Mammary epithelial cell (primary cell): ENCODE measurements at regions of chr11 and their contacts with region 1.

Region 1: GRCh38 chr11:13210424-13210823 is 67.2 kb upstream of the BMAL1 start:
- DNase-seq: peak; percentile 63
- H3K4me3 ChIP-seq: no peak overlapping the region
- H3K27ac ChIP-seq: no peak overlapping the region
- H3K4me1 ChIP-seq: peaks cover 33% of the 10 kb centered on the region
- H3K27me3 ChIP-seq: no peaks in the 10 kb centered on the region
- CTCF ChIP-seq: peak; percentile 77 to 79

Region 2: DNA sequence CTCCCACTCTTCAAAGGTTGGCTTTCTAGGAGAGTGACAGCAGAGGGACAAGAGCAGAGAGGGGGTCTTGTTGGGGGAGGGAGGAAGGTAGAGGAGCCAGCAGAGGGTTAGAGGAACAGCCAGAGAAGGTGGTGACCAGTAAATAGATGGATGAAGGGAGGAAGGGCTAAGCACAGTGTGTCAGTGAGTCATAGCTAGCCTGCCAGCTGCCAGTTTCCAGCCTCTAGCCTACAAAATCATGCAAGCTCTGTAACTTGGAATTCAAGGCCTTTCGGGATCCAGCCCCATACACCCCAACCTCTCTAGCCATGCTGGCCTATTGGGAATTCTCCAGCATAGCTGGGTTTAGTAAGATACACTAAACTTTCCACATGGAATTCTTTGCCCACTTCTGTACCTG is 683.6 kb before region 1 on chr11:
- CTCF ChIA-PET with region 1: no interaction called
- dilution Hi-C with region 1: no loop called
- in situ Hi-C with region 1: no loop called
- intact Hi-C with region 1: no loop called
- DNase-seq: no peak
- H3K4me3 ChIP-seq: no peak overlapping the region
- H3K27ac ChIP-seq: no peak overlapping the region
- H3K4me1 ChIP-seq: peaks cover 28% of the 10 kb centered on the region
- H3K27me3 ChIP-seq: no peaks in the 10 kb centered on the region
- CTCF ChIP-seq: no peak

Region 3: DNA sequence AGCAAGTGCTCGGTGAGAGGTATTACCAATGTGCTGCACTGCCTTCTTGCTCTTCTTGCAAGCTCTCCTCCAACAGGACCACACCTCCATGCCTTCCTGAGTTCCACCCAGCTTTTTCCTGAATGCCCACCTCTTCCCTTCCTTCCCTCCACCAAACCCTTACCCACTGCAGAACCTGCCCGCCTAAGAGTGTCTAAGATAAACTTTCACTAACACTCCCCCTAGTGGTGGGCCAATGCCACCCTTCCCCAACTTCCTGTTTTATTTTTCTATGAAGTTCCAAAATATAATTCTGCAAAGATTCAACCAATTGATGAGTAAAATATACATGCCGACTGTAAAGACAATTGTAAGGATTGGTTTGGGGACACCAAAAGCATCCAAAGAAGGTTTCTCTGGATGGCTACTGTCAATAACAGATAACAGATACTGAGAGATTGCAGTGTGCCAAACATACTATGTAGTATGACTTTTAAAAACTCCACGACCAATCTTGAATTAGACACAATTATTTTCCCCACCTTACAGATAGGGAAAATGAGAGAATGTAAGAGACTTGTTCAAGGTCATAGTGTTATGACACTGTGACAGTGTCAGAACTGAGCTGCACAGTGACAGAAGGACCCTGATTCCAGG is 28.6 kb after region 1 on chr11:
- CTCF ChIA-PET with region 1: interaction called, 6 read pairs
- dilution Hi-C with region 1: no loop called
- in situ Hi-C with region 1: no loop called
- intact Hi-C with region 1: loop called (anchors 1 kb)
- DNase-seq: no peak
- H3K4me3 ChIP-seq: no peak overlapping the region
- H3K27ac ChIP-seq: no peak overlapping the region
- H3K4me1 ChIP-seq: peaks cover 9% of the 10 kb centered on the region
- H3K27me3 ChIP-seq: no peaks in the 10 kb centered on the region
- CTCF ChIP-seq: peak; percentile 81 to 92

Region 4: DNA sequence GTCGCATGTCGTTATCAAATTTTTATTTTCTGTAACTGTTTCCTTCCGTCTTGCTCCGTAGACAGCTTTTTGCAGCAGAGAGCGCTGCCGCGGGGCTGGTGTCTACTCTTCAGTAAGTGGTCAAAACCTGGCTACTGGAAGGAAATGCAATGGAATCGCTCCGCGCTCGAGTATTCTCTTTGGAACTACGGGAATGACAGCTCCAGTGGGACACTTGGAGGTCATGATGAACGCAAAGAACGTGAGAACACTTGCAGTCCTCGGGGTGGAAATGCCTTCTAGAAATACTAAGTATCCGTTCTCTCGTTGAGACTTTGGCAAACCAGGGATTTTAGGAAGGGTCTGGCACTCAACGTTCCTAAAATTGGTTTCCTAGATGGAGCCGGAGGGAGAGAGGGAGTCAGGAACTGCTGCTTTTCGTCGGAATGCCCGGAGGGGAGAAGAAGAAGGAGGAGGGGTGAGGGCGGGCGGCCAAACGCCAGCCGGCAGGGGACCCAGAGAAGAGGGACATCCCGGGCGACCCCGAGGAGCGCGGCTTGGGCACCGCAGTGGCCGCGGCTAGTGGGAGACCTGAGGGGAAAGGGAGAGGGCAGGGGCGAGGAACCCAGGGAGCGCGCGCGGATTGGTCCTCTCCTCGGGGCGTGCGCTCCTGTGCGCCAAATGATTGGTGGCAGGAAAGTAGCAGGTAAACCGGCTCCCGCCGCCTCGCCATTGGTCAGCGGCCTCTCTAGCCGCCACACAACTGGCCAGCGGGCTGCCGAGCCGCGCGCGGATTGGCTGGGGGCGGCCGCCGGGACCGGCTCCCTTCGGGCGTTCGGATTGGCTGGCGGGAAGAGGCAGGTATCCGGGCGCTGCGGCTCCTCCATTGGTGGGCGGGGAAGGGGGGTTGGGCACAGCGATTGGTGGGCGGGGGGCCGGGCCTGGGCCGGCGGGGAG is 66.7 kb after region 1 on chr11:
- CTCF ChIA-PET with region 1: no interaction called
- dilution Hi-C with region 1: loop called (anchors 5 kb)
- in situ Hi-C with region 1: no loop called
- intact Hi-C with region 1: no loop called
- DNase-seq: peak; percentile 99
- H3K4me3 ChIP-seq: peak overlapping the region; percentile 83 to 96 (median 83)
- H3K27ac ChIP-seq: peak overlapping the region; percentile 75
- H3K4me1 ChIP-seq: peaks cover 17% of the 10 kb centered on the region
- H3K27me3 ChIP-seq: no peaks in the 10 kb centered on the region
- CTCF ChIP-seq: no peak

Region 5: DNA sequence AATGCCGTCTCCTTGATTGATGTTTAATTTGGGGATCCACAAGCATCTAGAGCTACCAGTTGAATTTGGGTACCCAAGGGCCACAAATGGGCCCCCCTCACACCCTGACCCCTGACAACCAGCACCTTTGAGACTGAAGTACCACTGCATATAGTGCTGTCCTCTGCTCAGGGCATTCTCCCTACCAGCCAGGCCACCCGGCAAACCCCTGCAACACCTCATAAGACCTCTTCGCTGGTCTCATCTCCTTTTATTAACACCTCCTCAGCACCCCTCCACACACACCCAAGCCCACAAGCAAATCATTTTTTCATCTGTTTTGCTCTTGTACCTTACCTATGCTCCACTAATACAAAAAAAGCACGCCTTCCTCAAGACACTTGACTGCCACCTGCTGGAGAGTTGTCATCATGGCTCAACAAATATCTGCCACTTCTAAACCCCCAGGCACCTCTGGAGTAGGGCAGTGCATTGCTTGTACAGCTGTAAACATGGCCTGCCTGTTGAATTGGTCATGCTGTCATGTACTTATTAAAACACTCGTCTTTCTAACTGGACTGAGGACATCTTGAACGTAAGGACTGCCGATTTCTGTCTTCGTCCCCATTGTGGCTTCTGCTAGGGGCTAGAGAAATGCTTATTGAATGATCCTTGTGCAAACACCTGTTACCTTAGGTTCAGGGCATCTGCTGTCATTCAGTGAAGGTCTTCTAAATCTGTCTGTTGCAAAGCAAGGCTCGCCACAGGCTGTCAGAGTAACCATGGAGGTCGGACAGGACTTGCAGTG is 133.7 kb after region 1 on chr11:
- CTCF ChIA-PET with region 1: interaction called, 9 read pairs
- dilution Hi-C with region 1: loop called (anchors 5 kb)
- in situ Hi-C with region 1: loop called (anchors 5 kb)
- intact Hi-C with region 1: loop called (anchors 1 kb)
- DNase-seq: peak; percentile 64
- H3K4me3 ChIP-seq: no peak overlapping the region
- H3K27ac ChIP-seq: no peak overlapping the region
- H3K4me1 ChIP-seq: peaks cover 30% of the 10 kb centered on the region
- H3K27me3 ChIP-seq: no peaks in the 10 kb centered on the region
- CTCF ChIP-seq: peak; percentile 79 to 82